Activated CD4-positive, alpha-beta T cell treated with anti-CD3 and anti-CD28 coated beads, Interleukin-2, amount 10 ng/mL, durations not matched to agents 24 days and 14 days (primary cell): ENCODE measurements at regions of chr7 and their contacts with region 1.

Region 1: DNA sequence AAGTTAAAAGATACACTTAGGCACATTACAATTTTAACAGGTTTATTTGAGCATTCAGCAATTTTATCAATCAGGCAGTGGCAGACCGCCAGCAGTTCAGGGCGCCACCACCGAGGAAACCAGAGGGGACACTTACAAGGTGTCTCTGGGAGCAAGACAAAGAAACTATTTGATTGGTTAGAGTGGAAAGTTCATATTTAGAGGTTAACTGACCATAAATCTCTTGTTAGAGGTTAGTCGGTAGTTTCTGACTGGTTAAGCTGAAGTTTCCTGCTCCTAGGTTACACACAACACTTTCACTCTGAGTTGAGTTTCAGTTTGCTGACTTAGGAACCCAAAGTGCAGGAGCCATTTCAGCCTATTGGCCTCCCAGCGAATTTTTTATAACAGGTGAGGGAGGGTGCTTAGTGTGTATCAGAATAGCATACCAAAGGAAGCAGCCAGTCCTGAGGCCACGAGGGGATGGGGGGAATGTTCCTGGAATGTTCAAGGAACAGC is 10.8 kb upstream of the PVRIG start:
- DNase-seq: peak; percentile 85
- H3K4me3 Mint-ChIP-seq: peak overlapping the region; percentile 74
- H3K27ac Mint-ChIP-seq: peak overlapping the region; percentile 86
- H3K4me1 Mint-ChIP-seq: peaks cover 46% of the 10 kb centered on the region
- H3K27me3 Mint-ChIP-seq: no peaks in the 10 kb centered on the region

Region 2: GRCh38 chr7:100101016-100101862 is 107.7 kb before region 1 on chr7 and contains the starts of genes AP4M1 and MCM7:
- intact Hi-C with region 1: no loop called
- DNase-seq: peak; percentile 99
- H3K4me3 Mint-ChIP-seq: peak within 1 kb of the TSS; percentile 94
- H3K27ac Mint-ChIP-seq: peak within 1 kb of the TSS; percentile 94
- H3K4me1 Mint-ChIP-seq: peaks cover 35% of the 10 kb centered on the region
- H3K27me3 Mint-ChIP-seq: no peaks in the 10 kb centered on the region
- total RNA-seq, gene AP4M1: 13.5 and 16.4 TPM in 2 replicates
- total RNA-seq, gene MCM7: 464 and 469 TPM in 2 replicates

Region 3: GRCh38 chr7:100167921-100168323 is 41.0 kb before region 1 on chr7:
- intact Hi-C with region 1: loop called (anchors 2 kb)
- DNase-seq: no peak
- H3K4me3 Mint-ChIP-seq: peak overlapping the region; percentile 81
- H3K27ac Mint-ChIP-seq: peak overlapping the region; percentile 31
- H3K4me1 Mint-ChIP-seq: peaks cover 68% of the 10 kb centered on the region
- H3K27me3 Mint-ChIP-seq: peaks cover 7% of the 10 kb centered on the region

Region 4: GRCh38 chr7:100177045-100178001 is 31.6 kb before region 1 on chr7 and contains the starts of genes GPC2 and STAG3:
- intact Hi-C with region 1: loop called (anchors 2 kb)
- DNase-seq: peak; percentile 99
- H3K4me3 Mint-ChIP-seq: peak within 1 kb of the TSS; percentile 83
- H3K27ac Mint-ChIP-seq: peak within 1 kb of the TSS; percentile 42
- H3K4me1 Mint-ChIP-seq: peaks cover 32% of the 10 kb centered on the region
- H3K27me3 Mint-ChIP-seq: peaks cover 4% of the 10 kb centered on the region
- total RNA-seq, gene GPC2: 6.3 and 7.9 TPM in 2 replicates
- total RNA-seq, gene STAG3: 23.7 TPM in 2 replicates

Region 5: DNA sequence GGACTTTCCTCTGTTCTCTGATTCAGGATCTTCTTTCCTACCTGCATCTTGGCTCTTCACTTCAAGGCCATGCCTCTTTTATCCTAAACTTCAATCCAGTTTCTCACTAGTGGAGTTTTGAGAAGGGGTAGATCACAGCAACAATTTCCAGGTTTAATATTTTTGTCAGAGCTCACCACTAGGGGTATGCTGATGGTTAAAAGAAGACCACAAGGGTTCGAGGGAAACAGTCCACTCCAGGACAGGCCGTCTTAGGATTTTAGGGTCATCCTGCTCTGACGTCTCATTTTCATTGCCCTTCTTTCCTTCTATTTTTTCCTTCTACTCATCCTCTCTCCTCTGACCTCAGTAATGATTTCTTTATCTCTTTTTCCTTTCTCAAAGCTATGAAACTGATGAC is 19.9 kb before region 1 on chr7:
- intact Hi-C with region 1: loop called (anchors 2 kb)
- DNase-seq: no peak
- H3K4me3 Mint-ChIP-seq: no peak overlapping the region
- H3K27ac Mint-ChIP-seq: no peak overlapping the region
- H3K4me1 Mint-ChIP-seq: peaks cover 12% of the 10 kb centered on the region
- H3K27me3 Mint-ChIP-seq: no peaks in the 10 kb centered on the region

Region 6: DNA sequence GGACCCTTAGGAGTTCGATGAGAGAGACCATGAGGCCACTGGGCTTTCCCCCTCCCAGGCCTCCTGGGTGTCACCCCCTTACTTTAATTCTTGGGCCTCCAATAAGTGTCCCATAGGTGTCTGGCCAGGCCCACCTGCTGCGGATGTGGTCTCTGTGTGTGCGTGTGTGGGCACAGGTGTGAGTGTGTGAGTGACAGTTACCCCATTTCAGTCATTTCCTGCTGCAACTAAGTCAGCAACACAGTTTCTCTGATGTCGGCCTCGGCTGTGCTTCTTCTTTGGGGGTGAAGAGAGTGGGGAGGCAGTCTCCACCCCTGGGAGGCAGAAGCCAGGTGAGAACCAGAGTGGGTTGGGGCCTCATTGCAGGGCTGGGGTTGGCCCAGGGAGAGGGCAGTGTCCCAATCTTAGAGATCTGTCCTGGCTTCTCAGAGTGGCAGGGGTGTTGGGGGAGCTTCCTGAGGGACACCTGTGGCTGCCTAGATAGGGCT is 12.3 kb after region 1 on chr7:
- intact Hi-C with region 1: loop called (anchors 1 kb)
- DNase-seq: peak; percentile 92
- H3K4me3 Mint-ChIP-seq: peak overlapping the region; percentile 96
- H3K27ac Mint-ChIP-seq: peak overlapping the region; percentile 99
- H3K4me1 Mint-ChIP-seq: peaks cover 54% of the 10 kb centered on the region
- H3K27me3 Mint-ChIP-seq: no peaks in the 10 kb centered on the region

Region 7: DNA sequence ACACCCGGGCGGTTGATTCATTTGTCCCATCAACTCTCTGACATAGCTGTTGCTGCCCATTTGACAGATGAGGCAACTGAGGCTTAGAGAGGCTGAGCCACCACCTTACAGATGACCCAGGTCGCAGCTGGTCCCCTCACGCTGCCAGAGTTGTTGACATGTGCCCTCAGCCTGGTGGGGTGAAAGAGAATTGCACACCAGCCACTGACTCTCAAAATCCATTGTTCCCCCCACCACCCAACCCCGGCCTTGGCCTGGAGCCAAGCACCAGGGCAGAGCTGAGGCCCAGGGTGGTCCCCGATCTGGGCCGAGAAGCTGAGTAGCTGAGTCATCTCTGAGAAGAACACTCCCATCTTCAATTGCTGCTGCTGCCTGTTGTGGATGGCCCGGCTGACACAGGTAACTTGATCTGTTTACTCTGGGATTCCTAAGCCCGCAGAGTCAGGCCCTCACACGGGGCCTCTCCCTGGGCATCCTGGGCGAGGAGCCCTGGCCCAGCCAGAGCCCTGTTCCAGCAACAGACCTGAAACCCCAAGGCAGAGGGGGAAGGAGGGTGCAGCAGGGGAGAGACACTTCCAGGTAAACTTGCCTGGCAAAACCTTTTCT is 38.3 kb after region 1 on chr7:
- intact Hi-C with region 1: no loop called
- DNase-seq: no peak
- H3K4me3 Mint-ChIP-seq: no peak overlapping the region
- H3K27ac Mint-ChIP-seq: no peak overlapping the region
- H3K4me1 Mint-ChIP-seq: peaks cover 17% of the 10 kb centered on the region
- H3K27me3 Mint-ChIP-seq: no peaks in the 10 kb centered on the region